Posterior cingulate gyrus (tissue), 11 donors: ENCODE measurements at regions of chr10 and their contacts with region 1.

Region 1: GRCh38 chr10:12129222-12130111 is at the start of gene SEC61A2:
- DNase-seq: peak; percentile 90 to 100 (median 96)

Region 2: DNA sequence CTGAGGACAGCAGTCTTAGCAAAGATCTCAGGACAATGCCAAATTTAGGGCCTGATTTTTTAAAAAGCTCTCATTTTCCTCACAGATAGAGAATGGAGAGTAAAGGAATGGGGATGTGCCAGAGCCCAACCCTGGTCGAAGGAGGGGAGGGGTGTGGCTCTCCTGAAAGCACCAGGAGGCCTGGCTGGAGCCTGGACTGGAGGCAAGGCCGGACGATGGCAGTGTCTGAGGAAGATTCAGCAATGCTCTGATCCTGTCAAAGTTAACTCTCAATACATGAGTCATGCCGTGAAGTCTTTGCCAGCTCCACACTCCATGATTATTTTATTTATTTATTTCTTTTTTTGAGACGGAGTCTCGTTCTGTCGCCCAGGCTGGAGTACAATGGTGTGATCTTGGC is 195.2 kb before region 1 on chr10:
- intact Hi-C with region 1: no loop called
- DNase-seq: no peak

Region 3: GRCh38 chr10:11949152-11949551 is 180.3 kb before region 1 on chr10:
- intact Hi-C with region 1: no loop called
- DNase-seq: no peak

Region 4: GRCh38 chr10:12042797-12043651 is 86.4 kb before region 1 on chr10 and contains the start of gene UPF2:
- intact Hi-C with region 1: loop called (anchors 1 kb)
- DNase-seq: peak; percentile 95 to 99 (median 96)

Region 5: DNA sequence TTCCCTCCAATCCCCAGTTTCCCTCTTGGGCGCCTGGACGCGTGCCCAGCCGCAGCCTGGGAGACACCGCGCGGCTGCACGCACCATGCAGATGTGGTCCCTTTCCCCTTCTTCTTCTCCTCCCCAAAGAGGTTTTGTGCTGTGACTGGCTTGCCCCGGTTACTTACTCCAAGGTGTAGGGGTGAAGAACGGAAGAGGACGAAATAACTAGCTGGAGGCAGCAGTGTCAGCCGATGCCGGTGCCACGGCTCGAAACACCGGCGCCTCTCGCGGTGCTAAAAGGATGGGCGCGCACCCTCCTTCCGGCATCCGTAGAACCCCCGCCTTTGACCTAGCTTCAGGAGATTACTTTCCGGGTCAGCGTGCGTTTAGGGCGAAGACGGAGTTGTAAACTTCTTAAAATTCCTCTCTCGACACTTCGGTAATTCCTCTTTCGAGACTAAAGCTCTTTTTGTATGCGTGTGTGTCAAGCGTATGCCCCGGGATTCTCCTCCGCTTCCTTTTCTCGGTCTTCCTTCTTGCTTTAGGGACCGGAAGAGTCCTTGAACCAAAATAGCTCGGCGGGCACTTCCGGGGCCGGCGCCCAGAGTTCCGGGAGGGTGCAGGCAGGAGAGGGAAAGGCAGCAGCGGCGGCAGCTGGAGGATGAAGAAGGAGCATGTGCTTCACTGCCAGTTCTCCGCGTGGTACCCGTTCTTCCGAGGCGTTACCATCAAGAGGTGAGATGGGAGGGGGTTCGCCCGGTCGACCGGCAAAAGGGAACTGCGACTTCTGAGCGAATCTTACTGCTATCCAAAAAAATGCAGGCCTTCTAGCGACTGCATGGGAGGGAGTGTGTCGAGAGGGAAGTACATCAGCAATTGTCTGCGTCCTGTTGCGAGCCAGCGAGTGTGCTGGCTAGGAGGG is 66.4 kb after region 1 on chr10 and contains the starts of genes CDC123 and NUDT5:
- intact Hi-C with region 1: loop called (anchors 2 kb)
- DNase-seq: peak; percentile 83 to 98 (median 87)